H1 (cell line): ENCODE measurements at regions of chr19 and their contacts with region 1.

Region 1: GRCh38 chr19:18141894-18142293 is 11.1 kb upstream of the PIK3R2 start:
- DNase-seq: no peak
- H3K4me3 ChIP-seq: no peak overlapping the region
- H3K27ac ChIP-seq: no peak overlapping the region
- H3K4me1 ChIP-seq: no peaks in the 10 kb centered on the region
- H3K27me3 ChIP-seq: no peaks in the 10 kb centered on the region
- CTCF ChIP-seq: no peak
- EP300 ChIP-seq: no peak
- POLR2A ChIP-seq: no peak
- RAD21 ChIP-seq: no peak

Region 2: DNA sequence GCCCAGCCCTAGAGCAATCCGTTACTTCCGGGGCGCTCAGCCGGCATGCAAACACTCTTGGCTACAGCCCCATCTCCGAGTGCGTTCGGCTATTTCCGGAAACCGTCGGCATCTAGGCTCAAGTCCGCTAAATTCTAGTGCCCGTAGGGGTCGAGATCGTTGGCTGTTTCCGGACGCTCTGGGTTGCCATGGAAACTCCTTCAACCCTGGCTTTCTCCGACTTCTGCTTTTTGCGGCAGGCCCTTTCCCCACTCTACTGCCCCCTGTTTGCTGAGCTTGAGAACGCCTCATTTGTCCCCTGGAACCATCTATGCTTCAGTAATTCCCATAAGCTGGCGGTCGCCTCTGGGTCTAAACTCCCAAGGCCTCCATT is 10.5 kb after region 1 on chr19:
- CTCF ChIA-PET with region 1: interaction called, 13 read pairs
- POLR2A ChIA-PET with region 1: interaction called, 7 read pairs
- DNase-seq: peak; percentile 97 to 99
- H3K4me3 ChIP-seq: peak overlapping the region; percentile 63 to 83 (median 76)
- H3K27ac ChIP-seq: peak overlapping the region; percentile 94
- H3K4me1 ChIP-seq: peaks cover 0 to 8% (median 4%) of the 10 kb centered on the region in 4 experiments; a peak in 4 of 7 replicates
- H3K27me3 ChIP-seq: no peaks in the 10 kb centered on the region
- CTCF ChIP-seq: peak; percentile 46 to 74 (median 46); a peak in 3 of 4 replicates
- EP300 ChIP-seq: no peak
- POLR2A ChIP-seq: no peak
- RAD21 ChIP-seq: peak in 1 of 2 experiments; percentile 21; a peak in 1 of 4 replicates